ENCODE measurements at regions of chr17 and their contacts with region 1.

Region 1: GRCh38 chr17:74280093-74280513 is 6.1 kb downstream of the DNAI2 start:
- DNase-seq: no peak

Region 2: GRCh38 chr17:74296548-74296936 is 16.4 kb after region 1 on chr17:
- CTCF ChIA-PET with region 1: interaction called, 10 read pairs
- POLR2A ChIA-PET with region 1: no interaction called
- DNase-seq: peak; percentile 56

Region 3: DNA sequence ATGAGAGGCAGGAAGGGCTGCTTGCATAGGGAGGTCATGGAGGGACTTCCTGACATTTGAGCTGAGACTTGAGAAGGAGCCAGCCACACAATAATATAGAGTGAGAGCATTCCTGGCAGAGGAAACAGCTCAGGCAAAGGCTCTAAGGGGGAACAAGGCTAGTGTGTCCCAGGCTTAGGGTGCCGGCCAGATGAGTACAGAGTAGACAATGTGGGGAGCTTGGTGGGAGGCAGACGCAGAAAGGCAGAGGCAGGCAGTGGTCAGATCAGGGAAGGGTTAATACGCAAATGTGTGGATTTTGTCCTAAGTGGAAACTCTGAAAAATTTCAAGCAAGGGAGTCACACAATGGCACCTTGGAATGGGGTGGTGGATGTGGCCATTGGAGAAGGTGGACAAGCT is 219.9 kb after region 1 on chr17:
- CTCF ChIA-PET with region 1: interaction called, 10 read pairs
- POLR2A ChIA-PET with region 1: no interaction called
- DNase-seq: no peak

Measured in HEK293T (cell line).